Posterior cingulate gyrus (tissue), 11 donors: ENCODE measurements at regions of chr18 and their contacts with region 1.

Region 1: DNA sequence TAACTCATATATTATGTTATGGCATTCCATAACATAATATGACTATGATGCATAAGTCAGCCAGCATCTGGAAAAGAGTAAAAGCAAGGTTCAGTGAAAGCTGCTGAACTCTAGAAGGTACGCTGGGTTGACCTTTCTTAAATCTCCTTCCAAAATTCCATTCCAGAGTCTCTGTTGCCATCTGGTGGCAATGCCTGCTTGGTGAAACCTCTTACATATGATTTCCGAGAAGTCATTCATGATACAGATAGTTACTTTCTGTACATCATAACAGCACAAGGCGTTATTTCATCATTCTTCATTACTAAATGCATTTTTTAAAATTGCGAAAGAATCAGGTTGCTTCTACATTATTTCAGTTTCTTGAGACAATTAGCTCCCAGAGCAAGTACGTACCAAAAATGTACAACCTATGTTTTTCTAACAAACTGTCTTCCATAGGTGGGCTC is 7.0 kb upstream of the EPG5 start:
- DNase-seq: peak in 6 of 10 donors; percentile 22 to 66 (median 56)

Region 2: GRCh38 chr18:45664824-45665763 is 309.0 kb before region 1 on chr18:
- intact Hi-C with region 1: loop called (anchors 10 kb)
- DNase-seq: peak in 6 of 10 donors; percentile 37 to 90 (median 62)

Region 3: GRCh38 chr18:45690975-45691815 is 282.9 kb before region 1 on chr18:
- intact Hi-C with region 1: loop called (anchors 1 kb)
- DNase-seq: peak; percentile 55 to 96 (median 81)

Region 4: DNA sequence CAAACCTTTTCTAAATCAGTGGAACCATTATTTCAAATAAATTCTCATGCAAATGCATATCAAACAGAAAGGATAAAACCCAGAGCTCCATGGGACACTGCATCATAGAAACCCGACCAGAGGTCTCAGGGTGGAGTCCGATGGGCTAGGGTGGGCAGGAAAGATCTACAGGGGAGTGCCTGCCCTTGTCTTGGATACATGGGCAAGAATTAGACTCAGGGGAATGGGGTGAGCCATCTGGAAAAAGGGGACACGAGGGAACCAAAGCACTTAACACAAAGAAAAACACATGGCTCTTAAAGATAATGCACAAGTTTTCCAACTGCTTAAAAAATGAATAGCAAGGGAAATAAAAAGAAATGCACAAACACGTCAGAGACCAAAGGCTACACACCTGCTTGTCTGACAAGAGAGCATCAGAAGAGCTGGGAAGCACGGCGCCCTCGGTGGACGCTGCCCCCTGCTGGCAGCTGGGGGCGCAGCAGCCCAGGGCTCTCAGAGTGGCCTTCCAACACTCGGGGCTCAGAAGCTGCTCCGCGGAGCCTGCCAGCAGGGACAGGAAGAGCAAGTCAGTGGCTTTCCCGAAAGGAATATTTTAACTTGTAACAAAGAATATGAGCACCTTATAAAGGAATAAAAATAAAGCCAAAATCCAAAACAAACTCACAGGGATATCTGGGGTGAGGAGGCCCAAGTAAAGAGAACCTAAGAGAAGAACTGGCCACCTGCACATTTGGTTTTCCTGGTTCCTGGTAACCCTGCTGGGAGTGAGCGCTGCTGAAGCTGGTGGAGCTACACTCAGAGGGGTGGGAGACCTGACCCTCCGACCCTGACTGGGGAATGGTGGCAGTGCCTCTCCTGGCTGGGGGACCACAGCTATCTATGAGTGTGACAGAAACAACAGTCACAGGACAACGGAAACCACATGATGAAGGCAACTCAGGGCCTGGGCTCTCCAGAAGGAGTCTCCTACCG is 94.1 kb before region 1 on chr18:
- intact Hi-C with region 1: loop called (anchors 5 kb)
- DNase-seq: peak; percentile 31 to 95 (median 66)